Right ventricle myocardium inferior (tissue), 1 donor: ENCODE measurements at regions of chr9 and their contacts with region 1.

Region 1: GRCh38 chr9:104075801-104076753 is 18.0 kb upstream of the SMC2 start:
- DNase-seq: no peak
- ATAC-seq: no peak

Region 2: DNA sequence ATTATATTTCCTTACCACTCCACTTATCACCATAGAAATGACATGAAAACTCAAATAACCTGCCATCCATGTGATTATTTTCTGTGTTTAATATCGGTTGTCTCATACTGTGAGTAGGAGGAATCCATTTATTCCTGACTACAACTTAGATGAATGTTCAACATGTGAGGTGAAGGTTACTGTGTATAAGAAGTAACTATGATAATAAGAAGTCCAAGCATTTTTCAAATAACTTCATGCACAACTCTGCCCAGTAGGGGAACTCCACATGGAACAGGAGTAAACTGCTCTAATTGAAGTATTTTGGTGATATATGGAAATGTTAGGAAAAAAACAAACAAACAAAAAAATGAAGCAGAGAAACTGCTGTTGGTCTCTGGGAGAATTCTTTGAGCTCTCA is 1890.1 kb before region 1 on chr9:
- intact Hi-C with region 1: loop called (anchors 10 kb)
- DNase-seq: no peak
- ATAC-seq: no peak

Region 3: DNA sequence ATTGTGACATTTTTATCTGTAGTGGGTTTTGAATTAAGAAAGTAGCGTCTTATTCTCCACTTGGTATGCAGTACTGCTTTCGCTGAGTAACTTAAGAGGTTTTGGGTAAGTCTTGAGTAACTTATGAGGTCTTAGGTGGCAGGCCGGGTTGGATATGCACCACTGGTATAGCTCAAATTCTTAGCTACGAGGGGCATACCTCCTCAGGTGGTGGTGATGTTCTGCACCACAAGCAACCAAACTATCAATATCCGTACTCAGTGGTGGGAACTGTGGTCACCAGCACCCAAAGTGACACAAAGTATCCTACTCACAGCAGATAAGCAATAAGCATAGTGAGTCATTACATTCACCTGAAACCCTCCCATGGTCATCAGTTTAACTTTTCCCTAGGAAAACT is 31.7 kb after region 1 on chr9:
- intact Hi-C with region 1: no loop called
- DNase-seq: no peak
- ATAC-seq: no peak